Right ventricle myocardium inferior (tissue), 1 donor: ENCODE measurements at regions of chr15 and their contacts with region 1.

Region 1: GRCh38 chr15:67120839-67121643 is 55.6 kb downstream of the SMAD3 start:
- DNase-seq: peak; percentile 94
- ATAC-seq: peak; percentile 83

Region 2: DNA sequence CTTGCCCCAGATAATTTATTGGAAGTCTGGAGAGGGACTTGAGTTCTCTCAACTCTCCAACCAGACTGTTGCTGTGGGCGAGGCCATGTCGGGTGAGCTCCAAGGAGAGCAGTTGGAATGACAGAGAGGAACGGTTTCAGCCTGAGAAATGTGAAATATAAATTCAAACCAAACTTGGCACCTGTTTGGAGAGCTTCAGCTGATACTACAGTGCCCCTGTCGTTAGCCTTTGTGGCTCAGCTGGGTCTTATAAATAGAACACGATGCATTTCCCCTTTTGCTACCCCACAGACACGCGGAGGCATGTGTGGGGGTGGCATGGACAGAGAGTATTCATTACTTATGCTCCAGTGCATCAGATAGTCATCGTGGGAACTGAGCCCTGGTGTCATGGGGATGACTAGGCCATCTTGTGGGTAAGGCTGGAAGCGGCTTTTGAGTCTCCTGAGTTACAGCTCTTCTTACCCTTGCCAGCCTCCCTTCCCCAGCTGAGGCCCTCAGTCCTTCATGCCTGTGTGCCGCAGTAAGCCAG is 40.1 kb before region 1 on chr15:
- intact Hi-C with region 1: no loop called
- DNase-seq: no peak
- ATAC-seq: peak; percentile 37

Region 3: GRCh38 chr15:67165254-67166253 is 44.5 kb after region 1 on chr15:
- intact Hi-C with region 1: loop called (anchors 5 kb)
- DNase-seq: no peak
- ATAC-seq: peak; percentile 55

Region 4: DNA sequence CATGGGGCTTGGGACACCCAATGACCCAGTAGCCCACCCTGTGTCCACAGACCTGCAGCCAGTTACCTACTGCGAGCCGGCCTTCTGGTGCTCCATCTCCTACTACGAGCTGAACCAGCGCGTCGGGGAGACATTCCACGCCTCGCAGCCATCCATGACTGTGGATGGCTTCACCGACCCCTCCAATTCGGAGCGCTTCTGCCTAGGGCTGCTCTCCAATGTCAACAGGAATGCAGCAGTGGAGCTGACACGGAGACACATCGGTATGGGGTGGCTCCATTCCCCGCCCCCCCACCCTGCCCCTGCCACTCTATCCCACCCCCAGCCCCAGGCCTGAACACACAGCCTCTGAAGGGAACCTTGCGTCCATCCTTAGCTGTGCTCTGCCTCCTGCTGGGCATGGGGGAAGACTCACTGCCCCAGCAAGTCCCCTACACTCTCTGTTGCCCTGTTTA is 60.2 kb after region 1 on chr15:
- intact Hi-C with region 1: loop called (anchors 5 kb)
- DNase-seq: no peak
- ATAC-seq: no peak